ENCODE measurements at regions of chr3 and their contacts with region 1.

Region 1: GRCh38 chr3:115169808-115170207 is 22.7 kb upstream of the ZBTB20 start:
- DNase-seq: no peak
- ATAC-seq: no peak

Region 2: GRCh38 chr3:114370537-114371174 is 799.2 kb before region 1 on chr3:
- intact Hi-C with region 1: loop called (anchors 10 kb)
- DNase-seq: no peak
- ATAC-seq: no peak

Region 3: DNA sequence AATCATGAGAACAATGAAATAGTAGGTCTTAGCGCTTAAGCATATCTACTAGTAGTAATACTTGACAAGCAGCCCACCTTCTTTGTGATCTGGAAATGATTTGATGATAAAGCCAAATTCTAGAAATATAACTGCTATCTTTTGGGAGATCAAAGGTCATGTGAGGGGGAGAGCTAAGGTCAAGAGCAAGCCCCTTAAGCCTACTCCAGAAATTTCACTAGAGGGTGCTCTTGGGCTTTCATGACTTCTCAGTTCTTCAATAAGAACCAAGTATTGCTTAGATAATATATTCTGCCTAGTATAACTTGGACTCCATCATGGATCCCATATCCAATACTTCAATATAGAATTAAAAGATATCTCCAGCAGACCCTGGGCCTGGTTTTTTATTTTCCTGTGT is 342.3 kb before region 1 on chr3:
- intact Hi-C with region 1: loop called (anchors 10 kb)
- DNase-seq: no peak
- ATAC-seq: peak; percentile 84

Region 4: DNA sequence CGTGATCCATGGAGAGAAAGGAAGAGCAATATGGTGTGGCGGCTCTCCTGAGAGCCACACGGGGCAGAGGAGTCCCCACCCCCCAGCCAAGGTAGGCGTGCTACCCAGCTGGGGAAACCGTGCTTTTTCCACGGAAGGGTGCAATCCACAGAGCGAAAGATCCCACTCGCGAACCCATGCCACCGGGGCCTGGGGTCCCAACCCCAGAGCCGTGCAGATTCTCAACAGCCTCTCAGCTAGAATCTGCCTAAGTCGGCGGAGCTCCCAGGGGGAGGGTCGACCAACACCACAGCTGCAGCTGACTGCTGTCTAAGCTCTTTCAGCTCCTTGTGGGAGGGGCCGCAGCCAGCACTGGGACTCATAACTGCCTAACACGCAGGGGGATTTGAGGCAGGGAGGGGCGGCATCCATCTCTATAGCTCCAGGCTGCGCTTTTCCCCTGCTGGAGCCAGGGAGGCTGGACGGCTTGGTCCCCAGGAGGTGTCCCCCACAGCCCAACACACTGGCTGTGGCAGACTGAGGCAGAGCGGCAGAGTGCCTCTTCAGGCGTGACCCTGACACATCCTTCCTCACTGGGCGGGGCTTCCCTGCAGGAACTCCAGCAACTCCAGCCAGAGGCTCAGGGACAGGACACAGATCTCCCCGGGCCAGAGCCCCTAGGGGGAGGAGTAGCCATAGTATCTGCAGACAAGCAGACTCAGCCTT is 84.8 kb after region 1 on chr3:
- intact Hi-C with region 1: no loop called
- DNase-seq: no peak
- ATAC-seq: no peak

Region 5: DNA sequence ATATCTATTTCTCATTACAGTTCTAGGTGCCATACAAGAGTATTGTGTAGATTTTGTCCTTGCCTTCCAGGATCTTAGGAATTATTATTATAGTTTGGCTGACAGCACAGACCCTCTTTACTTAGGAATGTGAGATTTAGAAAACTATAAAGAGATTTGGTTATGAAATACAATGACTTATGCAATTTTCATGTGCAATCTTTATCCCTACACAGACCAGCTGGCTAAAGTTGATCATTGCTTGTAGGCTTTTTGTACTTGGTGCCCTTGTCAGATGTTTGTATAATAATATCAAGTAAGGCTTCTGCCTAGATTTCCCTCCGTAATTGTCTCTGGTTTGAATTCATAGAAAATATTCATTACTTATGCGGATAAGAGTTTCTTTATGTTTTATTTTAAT is 279.0 kb after region 1 on chr3:
- intact Hi-C with region 1: no loop called
- DNase-seq: no peak
- ATAC-seq: no peak

Region 6: GRCh38 chr3:115469649-115470048 is 299.8 kb after region 1 on chr3:
- intact Hi-C with region 1: no loop called
- DNase-seq: no peak
- ATAC-seq: no peak